ENCODE measurements at regions of chr3 and their contacts with region 1.

Region 1: DNA sequence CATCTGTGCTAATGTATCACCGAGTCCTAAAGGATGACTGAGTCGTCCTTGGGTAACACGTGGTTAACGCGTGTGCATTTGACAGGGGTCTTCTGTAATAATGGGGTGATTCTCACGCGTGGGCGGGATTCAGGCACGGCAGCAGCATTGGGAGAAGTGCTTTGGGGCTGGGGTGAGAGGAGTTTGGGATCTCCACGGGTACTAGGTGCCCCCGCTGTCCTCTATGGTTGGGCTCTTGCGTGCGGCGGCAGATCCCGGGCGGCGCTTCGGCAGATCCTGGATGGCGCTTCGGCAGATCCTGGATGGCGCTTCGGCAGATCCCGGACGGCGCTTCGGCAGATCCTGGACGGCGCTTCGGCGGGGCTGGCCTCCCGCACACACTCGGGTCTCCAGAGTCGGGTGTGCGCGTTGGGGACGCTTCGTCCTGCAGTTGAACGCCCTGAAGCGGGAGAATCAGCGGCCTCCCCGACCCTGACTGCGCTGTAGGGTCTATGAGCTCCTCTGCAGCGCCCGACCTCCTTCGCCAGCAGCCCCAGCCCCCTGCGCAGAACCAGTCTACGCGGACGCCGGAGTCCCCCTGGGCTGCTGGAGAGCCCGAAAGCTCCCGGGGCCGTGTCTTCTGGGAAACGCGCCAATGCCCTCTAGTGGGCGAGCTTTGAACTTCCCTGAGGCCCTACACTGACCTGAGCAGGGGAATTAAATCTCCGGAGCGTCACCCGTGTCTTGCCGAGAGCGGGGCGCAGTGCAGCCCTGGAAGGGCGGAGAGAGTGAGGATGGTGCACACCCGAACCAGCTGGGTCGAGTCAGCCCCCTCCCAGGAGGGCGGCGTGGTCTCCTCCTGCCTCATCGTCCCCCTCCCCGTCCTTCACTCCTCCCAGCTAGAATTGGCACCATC is 48.1 kb upstream of the EPHB3 start:
- DNase-seq: peak; percentile 59 to 83 (median 75)
- ATAC-seq: peak; percentile 99
- H3K4me3 ChIP-seq: peak overlapping the region; percentile 40
- H3K4me3 Mint-ChIP-seq: peak overlapping the region; percentile 12 to 81 (median 69)
- H3K27ac ChIP-seq: no peak overlapping the region
- H3K27ac Mint-ChIP-seq: no peak overlapping the region
- H3K4me1 ChIP-seq: no peaks in the 10 kb centered on the region
- H3K4me1 Mint-ChIP-seq: peaks cover 4 to 14% (median 11%) of the 10 kb centered on the region in 7 donors
- H3K27me3 ChIP-seq: peaks cover 0 to 4% of the 10 kb centered on the region in 2 donors
- H3K27me3 Mint-ChIP-seq: peaks cover 49 to 77% (median 63%) of the 10 kb centered on the region in 5 donors

Region 2: DNA sequence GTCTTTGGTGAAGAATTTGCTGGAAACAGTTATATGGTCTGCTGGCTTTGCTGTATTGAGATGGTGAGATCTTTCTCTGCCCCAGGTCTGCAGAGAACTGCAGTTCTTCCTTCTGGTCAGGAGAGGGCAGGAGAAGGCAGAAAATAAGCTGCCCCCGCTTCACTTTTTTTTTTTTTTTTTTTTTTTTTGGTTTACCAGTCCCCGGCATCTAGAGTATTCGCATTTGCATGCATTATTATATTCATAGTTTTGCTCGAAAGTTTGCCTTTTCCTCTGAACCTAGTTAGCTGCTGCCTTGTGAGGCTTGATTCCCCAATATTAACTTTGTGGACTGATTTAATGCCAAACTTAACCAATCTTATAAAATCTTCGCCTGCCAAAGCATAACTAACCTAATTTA is 618.2 kb before region 1 on chr3:
- CTCF ChIA-PET with region 1: interaction called, 4 read pairs
- POLR2A ChIA-PET with region 1: no interaction called
- intact Hi-C with region 1: loop called in 1 of 2 experiments (anchors 1 kb)
- DNase-seq: peak in 7 of 9 donors; percentile 19 to 67 (median 49)
- ATAC-seq: peak; percentile 91
- H3K4me3 ChIP-seq: no peak overlapping the region
- H3K4me3 Mint-ChIP-seq: no peak overlapping the region
- H3K27ac ChIP-seq: no peak overlapping the region
- H3K27ac Mint-ChIP-seq: peak overlapping the region in 1 of 9 donors; percentile 18
- H3K4me1 ChIP-seq: no peaks in the 10 kb centered on the region
- H3K4me1 Mint-ChIP-seq: peaks cover 0 to 6% (median 0%) of the 10 kb centered on the region in 7 donors
- H3K27me3 ChIP-seq: peaks cover 0 to 3% of the 10 kb centered on the region in 2 donors
- H3K27me3 Mint-ChIP-seq: peaks cover 7 to 29% (median 11%) of the 10 kb centered on the region in 5 donors

Region 3: GRCh38 chr3:184371570-184372018 is 141.9 kb before region 1 on chr3:
- CTCF ChIA-PET with region 1: interaction called, 25 read pairs
- POLR2A ChIA-PET with region 1: no interaction called
- intact Hi-C with region 1: loop called (anchors 1 kb)
- DNase-seq: peak; percentile 42 to 70 (median 59)
- ATAC-seq: peak; percentile 96
- H3K4me3 ChIP-seq: no peak overlapping the region
- H3K4me3 Mint-ChIP-seq: no peak overlapping the region
- H3K27ac ChIP-seq: no peak overlapping the region
- H3K27ac Mint-ChIP-seq: peak overlapping the region in 8 of 9 donors; percentile 4 to 65 (median 26)
- H3K4me1 ChIP-seq: no peaks in the 10 kb centered on the region
- H3K4me1 Mint-ChIP-seq: peaks cover 5 to 18% (median 10%) of the 10 kb centered on the region in 7 donors
- H3K27me3 ChIP-seq: no peaks in the 10 kb centered on the region
- H3K27me3 Mint-ChIP-seq: peaks cover 4 to 27% (median 8%) of the 10 kb centered on the region in 5 donors

Region 4: DNA sequence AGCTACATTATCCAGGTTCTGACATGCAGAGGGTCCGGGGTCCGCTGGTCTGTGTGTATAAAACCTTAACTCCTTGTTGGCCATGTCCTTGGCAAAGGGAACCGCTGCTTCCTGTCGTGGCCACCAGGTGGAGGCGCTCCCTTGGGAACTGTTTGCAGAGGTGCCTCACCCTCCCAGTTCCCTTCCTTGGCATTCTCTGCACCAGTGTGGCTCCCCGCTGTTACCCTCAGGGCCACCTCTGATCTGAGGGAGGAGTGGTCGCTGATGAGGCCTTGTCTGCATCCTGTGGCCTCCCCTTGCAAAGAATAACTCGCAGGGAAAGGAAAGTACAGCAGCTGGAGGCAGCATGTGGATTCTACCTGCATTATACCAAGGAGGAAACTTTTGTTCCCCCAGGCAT is 44.1 kb before region 1 on chr3:
- CTCF ChIA-PET with region 1: no interaction called
- POLR2A ChIA-PET with region 1: no interaction called
- intact Hi-C with region 1: loop called (anchors 1 to 2 kb)
- DNase-seq: peak in 1 of 9 donors; percentile 29
- ATAC-seq: no peak
- H3K4me3 ChIP-seq: no peak overlapping the region
- H3K4me3 Mint-ChIP-seq: no peak overlapping the region
- H3K27ac ChIP-seq: no peak overlapping the region
- H3K27ac Mint-ChIP-seq: no peak overlapping the region
- H3K4me1 ChIP-seq: peaks cover 0 to 6% of the 10 kb centered on the region in 2 donors
- H3K4me1 Mint-ChIP-seq: peaks cover 4 to 29% (median 14%) of the 10 kb centered on the region in 7 donors
- H3K27me3 ChIP-seq: no peaks in the 10 kb centered on the region
- H3K27me3 Mint-ChIP-seq: peaks cover 12 to 38% (median 22%) of the 10 kb centered on the region in 5 donors

Region 5: GRCh38 chr3:184538600-184539431 is 25.3 kb after region 1 on chr3:
- CTCF ChIA-PET with region 1: interaction called, 14 read pairs
- POLR2A ChIA-PET with region 1: no interaction called
- intact Hi-C with region 1: loop called (anchors 1 kb)
- DNase-seq: no peak
- ATAC-seq: no peak
- H3K4me3 ChIP-seq: no peak overlapping the region
- H3K4me3 Mint-ChIP-seq: no peak overlapping the region
- H3K27ac ChIP-seq: no peak overlapping the region
- H3K27ac Mint-ChIP-seq: peak overlapping the region in 1 of 9 donors; percentile 28
- H3K4me1 ChIP-seq: no peaks in the 10 kb centered on the region
- H3K4me1 Mint-ChIP-seq: peaks cover 3 to 10% (median 6%) of the 10 kb centered on the region in 7 donors
- H3K27me3 ChIP-seq: no peaks in the 10 kb centered on the region
- H3K27me3 Mint-ChIP-seq: peaks cover 0 to 35% (median 15%) of the 10 kb centered on the region in 5 donors

Region 6: GRCh38 chr3:184620475-184621119 is 107.1 kb after region 1 on chr3:
- CTCF ChIA-PET with region 1: no interaction called
- POLR2A ChIA-PET with region 1: no interaction called
- intact Hi-C with region 1: no loop called
- DNase-seq: no peak
- ATAC-seq: peak; percentile 44
- H3K4me3 ChIP-seq: no peak overlapping the region
- H3K4me3 Mint-ChIP-seq: no peak overlapping the region
- H3K27ac ChIP-seq: no peak overlapping the region
- H3K27ac Mint-ChIP-seq: peak overlapping the region in 1 of 9 donors; percentile 22
- H3K4me1 ChIP-seq: peaks cover 11 to 12% of the 10 kb centered on the region in 2 donors
- H3K4me1 Mint-ChIP-seq: peaks cover 8 to 21% (median 14%) of the 10 kb centered on the region in 7 donors
- H3K27me3 ChIP-seq: no peaks in the 10 kb centered on the region
- H3K27me3 Mint-ChIP-seq: peaks cover 7 to 40% (median 11%) of the 10 kb centered on the region in 5 donors

Measured in naive thymus-derived CD4-positive, alpha-beta T cell (primary cell).